ENCODE measurements at regions of chr3 and their contacts with region 1.

Region 1: DNA sequence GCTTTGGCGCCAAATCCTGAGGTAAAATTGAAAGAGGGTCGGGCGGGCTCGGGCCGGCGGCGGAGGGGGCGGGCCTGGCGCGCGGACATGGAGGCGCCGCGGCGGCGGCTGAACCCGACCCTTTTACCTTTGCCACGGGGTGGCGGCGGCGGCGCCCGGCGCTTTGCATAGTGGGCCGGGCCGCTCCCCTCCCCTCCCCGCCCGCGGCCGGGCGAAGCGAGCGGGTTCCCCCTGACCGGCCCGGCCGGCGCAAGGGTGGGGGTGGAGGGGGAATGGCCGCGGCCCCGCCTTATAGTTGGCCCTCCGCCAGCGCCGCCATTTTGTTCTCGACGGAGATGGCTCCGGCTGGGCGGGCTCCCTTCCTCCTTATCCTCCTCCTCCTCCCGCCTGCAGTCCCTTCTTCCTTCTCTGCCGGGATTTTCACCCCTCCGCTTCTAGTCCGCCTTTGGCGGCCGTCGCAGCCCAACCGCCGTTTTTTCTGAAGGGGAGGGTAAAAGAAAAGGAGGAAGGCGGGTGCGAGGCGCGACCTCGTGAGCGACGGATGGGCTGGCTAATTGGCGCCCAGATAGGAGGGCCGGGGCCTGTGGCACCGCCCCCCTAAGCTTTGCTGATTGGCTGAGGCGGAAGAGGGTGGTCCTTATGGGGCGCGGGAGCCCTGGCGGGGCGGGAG is 638 bp downstream of the NR2C2 start:
- DNase-seq: peak; percentile 96
- H3K4me3 Mint-ChIP-seq: peak overlapping the region; percentile 100
- H3K27ac Mint-ChIP-seq: peak overlapping the region; percentile 100
- H3K4me1 Mint-ChIP-seq: peaks cover 40% of the 10 kb centered on the region
- H3K27me3 Mint-ChIP-seq: no peaks in the 10 kb centered on the region

Region 2: DNA sequence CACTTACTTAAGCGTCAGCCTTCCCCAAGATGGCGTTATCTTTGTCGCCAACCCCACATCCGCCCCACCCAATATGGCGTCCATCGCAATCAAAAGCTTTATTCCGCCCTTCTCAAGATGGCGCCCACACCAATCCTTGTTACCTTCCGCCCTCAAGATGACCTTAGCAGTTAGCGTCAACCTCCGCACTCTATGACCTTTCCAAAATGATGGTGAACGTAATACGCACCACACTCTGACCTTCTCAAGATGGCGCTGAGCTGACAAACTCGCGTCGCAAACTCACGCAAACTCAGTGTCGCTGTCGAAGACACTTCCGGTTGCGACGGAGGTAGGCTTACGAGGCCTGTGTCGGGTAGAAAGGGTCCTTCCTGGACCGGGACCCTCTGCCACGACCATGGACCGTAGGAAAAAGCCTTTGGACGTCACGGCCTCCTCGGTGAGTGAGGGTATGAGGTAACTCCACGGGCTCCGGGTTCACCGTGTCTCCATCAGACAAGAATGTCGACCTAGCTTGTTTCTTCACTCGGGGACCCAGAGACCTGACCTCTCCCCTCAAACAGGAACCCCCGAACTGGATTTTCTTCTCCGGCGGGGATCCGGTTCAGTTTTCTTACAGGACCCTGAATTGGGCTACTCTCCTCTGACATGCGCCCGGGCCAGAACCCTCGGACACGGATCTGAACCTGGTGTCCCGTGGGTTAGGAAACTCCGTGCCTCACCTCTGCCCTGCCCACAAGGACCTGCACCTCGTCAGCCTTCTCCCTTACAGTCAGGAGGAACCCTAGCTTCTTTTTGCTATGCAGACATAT is 296.4 kb before region 1 on chr3 and contains the start of gene CCDC174:
- CTCF ChIA-PET with region 1: interaction called, 4 read pairs
- POLR2A ChIA-PET with region 1: interaction called, 33 read pairs
- DNase-seq: peak; percentile 97
- H3K4me3 Mint-ChIP-seq: peak within 1 kb of the TSS; percentile 96
- H3K27ac Mint-ChIP-seq: peak within 1 kb of the TSS; percentile 97
- H3K4me1 Mint-ChIP-seq: peaks cover 50% of the 10 kb centered on the region
- H3K27me3 Mint-ChIP-seq: no peaks in the 10 kb centered on the region
- total RNA-seq, gene CCDC174: 25.1 to 27.4 TPM

Region 3: DNA sequence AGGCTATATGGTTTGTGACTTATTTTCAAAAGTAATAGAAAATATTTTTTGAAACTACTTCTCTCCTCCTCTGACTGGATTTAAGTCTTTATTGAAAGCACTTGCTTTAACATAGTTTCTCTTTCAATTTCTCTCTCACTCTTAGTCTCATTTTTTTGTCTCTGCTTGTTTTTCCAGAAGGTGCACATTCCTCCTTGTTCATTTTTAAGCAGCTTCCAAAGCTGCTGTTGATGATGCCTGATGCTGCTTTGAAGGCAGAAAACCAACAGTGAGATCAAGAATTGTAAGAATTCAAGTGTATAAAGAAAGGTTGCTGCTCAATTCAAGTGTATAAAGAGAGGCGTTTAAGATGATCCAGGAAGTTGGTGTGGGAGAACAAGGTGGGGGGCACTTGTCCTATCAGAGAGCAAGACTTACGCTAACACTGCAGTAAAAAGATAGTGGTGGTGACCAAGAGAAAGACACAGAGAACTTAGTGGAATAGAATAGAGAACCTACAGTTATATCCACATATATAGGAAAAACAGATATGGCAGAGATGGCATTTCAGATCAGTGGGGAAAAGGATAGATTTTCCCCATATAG is 11.4 kb after region 1 on chr3:
- CTCF ChIA-PET with region 1: interaction called, 6 read pairs
- POLR2A ChIA-PET with region 1: interaction called, 13 read pairs
- DNase-seq: no peak
- H3K4me3 Mint-ChIP-seq: peak overlapping the region; percentile 76
- H3K27ac Mint-ChIP-seq: peak overlapping the region; percentile 79
- H3K4me1 Mint-ChIP-seq: peaks cover 42% of the 10 kb centered on the region
- H3K27me3 Mint-ChIP-seq: no peaks in the 10 kb centered on the region

Region 4: GRCh38 chr3:15495461-15496340 is 547.7 kb after region 1 on chr3:
- CTCF ChIA-PET with region 1: no interaction called
- POLR2A ChIA-PET with region 1: no interaction called
- DNase-seq: no peak
- H3K4me3 Mint-ChIP-seq: no peak overlapping the region
- H3K27ac Mint-ChIP-seq: no peak overlapping the region
- H3K4me1 Mint-ChIP-seq: peaks cover 31% of the 10 kb centered on the region
- H3K27me3 Mint-ChIP-seq: no peaks in the 10 kb centered on the region

Measured in activated CD4-positive, alpha-beta memory T cell treated with anti-CD3 and anti-CD28 coated beads, Interleukin-2, amount 10 ng/mL, durations not matched to agents 7 days and 5 days (primary cell).